ENCODE measurements at regions of chr6 and their contacts with region 1.

Region 1: GRCh38 chr6:87139236-87139635 is 16.1 kb upstream of the ZNF292 start:
- DNase-seq: peak; percentile 86
- H3K4me3 Mint-ChIP-seq: no peak overlapping the region
- H3K27ac Mint-ChIP-seq: no peak overlapping the region
- H3K4me1 Mint-ChIP-seq: peaks cover 2% of the 10 kb centered on the region
- H3K27me3 Mint-ChIP-seq: peaks cover 49% of the 10 kb centered on the region

Region 2: DNA sequence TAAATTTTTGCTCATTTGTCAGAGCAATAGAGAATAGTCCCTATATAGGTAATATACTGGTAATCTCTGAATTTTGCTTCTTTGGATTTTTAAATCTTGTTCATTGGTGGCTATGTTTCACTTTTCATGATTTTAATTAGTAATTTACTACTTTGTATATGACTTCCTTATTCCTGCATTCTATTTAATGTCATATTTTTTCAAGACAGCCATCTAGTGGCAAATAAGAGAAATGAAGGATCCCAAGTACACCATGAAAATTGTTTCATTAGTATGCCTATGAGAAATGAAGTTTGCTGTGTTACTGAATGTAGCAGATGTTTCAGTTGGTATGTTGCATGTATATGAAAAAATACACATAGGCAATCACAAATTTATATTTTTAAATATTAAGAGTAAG is 98.6 kb after region 1 on chr6:
- intact Hi-C with region 1: loop called (anchors 1 kb)
- DNase-seq: no peak
- H3K4me3 Mint-ChIP-seq: no peak overlapping the region
- H3K27ac Mint-ChIP-seq: no peak overlapping the region
- H3K4me1 Mint-ChIP-seq: peaks cover 12% of the 10 kb centered on the region
- H3K27me3 Mint-ChIP-seq: no peaks in the 10 kb centered on the region

Region 3: DNA sequence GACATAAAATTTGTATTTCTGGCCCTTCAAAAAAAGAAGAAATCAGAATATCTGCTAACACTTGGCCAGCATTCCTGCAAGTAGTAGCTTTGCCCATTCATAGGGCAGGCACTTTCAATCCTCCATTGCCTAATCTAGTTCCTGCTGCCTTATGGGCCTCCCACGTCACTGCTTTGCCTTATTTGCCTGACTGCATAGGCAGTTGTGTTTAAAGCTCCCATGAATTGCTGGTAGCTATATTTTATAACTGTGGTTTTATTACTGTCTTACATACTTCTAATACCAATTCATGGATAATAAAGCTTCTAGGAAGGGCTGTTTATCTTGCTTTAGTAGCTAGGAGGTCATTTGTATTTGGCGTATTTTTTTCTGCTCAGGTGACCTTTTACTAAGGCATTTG is 325.8 kb after region 1 on chr6:
- intact Hi-C with region 1: no loop called
- DNase-seq: no peak
- H3K4me3 Mint-ChIP-seq: no peak overlapping the region
- H3K27ac Mint-ChIP-seq: no peak overlapping the region
- H3K4me1 Mint-ChIP-seq: no peaks in the 10 kb centered on the region
- H3K27me3 Mint-ChIP-seq: peaks cover 40% of the 10 kb centered on the region

Region 4: GRCh38 chr6:88584581-88585275 is 1445.5 kb after region 1 on chr6:
- intact Hi-C with region 1: loop called (anchors 5 kb)
- DNase-seq: no peak
- H3K4me3 Mint-ChIP-seq: no peak overlapping the region
- H3K27ac Mint-ChIP-seq: no peak overlapping the region
- H3K4me1 Mint-ChIP-seq: no peaks in the 10 kb centered on the region
- H3K27me3 Mint-ChIP-seq: peaks cover 7% of the 10 kb centered on the region